Prostate gland (tissue), 2 donors: ENCODE measurements at regions of chr15 and their contacts with region 1.

Region 1: GRCh38 chr15:99486371-99487336 is 79.1 kb upstream of the MEF2A start:
- DNase-seq: peak; percentile 80
- H3K4me3 ChIP-seq: peak overlapping the region; percentile 17 to 22
- H3K27ac ChIP-seq: peak overlapping the region in 1 of 2 donors; percentile 16
- H3K4me1 ChIP-seq: peaks cover 5% of the 10 kb centered on the region
- H3K27me3 ChIP-seq: no peaks in the 10 kb centered on the region
- CTCF ChIP-seq: no peak
- POLR2A ChIP-seq: no peak

Region 2: DNA sequence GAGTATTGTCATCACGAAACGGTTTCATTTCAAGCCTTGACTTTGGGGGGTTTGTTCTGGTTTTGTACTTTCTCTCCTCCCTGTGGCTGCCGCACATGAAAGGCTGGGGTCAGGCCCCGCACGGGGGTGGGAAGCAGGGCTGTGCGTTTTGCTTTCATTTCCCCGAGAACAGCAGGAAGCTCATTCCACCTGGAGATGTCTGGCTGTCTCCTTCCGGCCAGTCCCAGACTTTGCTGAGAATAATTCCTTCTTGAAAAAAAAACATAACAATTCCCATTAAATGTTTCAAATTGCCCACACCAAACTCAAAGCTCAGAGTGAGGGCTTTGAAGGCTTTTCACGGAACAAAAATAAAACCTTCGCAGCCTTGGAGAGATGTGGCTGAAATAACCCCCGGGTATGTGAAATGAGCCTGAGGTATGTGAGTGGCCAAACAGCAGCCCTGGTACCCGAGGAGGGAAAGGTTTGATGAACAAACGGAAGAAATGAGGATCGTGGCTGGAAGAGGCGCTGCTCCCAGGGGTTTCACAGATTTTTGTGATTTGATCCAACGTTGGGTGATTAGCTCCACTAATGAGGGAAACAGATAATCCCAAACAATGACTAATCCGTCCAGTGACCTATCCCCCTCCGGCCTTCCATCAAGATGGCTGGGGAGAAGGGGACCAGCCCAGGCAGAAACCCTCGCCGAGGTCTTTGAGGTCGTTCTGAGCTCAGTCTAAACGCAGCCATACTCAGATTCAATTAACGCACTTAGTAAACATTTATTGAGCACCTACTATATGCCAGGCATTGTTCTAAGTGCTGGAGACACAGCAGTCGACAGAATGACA is 47.7 kb before region 1 on chr15:
- intact Hi-C with region 1: loop called (anchors 1 kb)
- DNase-seq: peak; percentile 2
- H3K4me3 ChIP-seq: no peak overlapping the region
- H3K27ac ChIP-seq: no peak overlapping the region
- H3K4me1 ChIP-seq: peaks cover 2% of the 10 kb centered on the region
- H3K27me3 ChIP-seq: no peaks in the 10 kb centered on the region
- CTCF ChIP-seq: no peak
- POLR2A ChIP-seq: no peak

Region 3: GRCh38 chr15:99522288-99522687 is 35.6 kb after region 1 on chr15:
- intact Hi-C with region 1: no loop called
- DNase-seq: no peak
- H3K4me3 ChIP-seq: no peak overlapping the region
- H3K27ac ChIP-seq: no peak overlapping the region
- H3K4me1 ChIP-seq: no peaks in the 10 kb centered on the region
- H3K27me3 ChIP-seq: no peaks in the 10 kb centered on the region
- CTCF ChIP-seq: no peak
- POLR2A ChIP-seq: no peak

Region 4: GRCh38 chr15:99603828-99604227 is 117.2 kb after region 1 on chr15:
- intact Hi-C with region 1: no loop called
- DNase-seq: no peak
- H3K4me3 ChIP-seq: no peak overlapping the region
- H3K27ac ChIP-seq: no peak overlapping the region
- H3K4me1 ChIP-seq: no peaks in the 10 kb centered on the region
- H3K27me3 ChIP-seq: no peaks in the 10 kb centered on the region
- CTCF ChIP-seq: no peak
- POLR2A ChIP-seq: no peak